Cardiac septum (tissue), 1 donor: ENCODE measurements at regions of chr2 and their contacts with region 1.

Region 1: GRCh38 chr2:60881047-60881932 is at the start of gene REL:
- DNase-seq: peak; percentile 97
- total RNA-seq, gene REL: 5.7 TPM

Region 2: DNA sequence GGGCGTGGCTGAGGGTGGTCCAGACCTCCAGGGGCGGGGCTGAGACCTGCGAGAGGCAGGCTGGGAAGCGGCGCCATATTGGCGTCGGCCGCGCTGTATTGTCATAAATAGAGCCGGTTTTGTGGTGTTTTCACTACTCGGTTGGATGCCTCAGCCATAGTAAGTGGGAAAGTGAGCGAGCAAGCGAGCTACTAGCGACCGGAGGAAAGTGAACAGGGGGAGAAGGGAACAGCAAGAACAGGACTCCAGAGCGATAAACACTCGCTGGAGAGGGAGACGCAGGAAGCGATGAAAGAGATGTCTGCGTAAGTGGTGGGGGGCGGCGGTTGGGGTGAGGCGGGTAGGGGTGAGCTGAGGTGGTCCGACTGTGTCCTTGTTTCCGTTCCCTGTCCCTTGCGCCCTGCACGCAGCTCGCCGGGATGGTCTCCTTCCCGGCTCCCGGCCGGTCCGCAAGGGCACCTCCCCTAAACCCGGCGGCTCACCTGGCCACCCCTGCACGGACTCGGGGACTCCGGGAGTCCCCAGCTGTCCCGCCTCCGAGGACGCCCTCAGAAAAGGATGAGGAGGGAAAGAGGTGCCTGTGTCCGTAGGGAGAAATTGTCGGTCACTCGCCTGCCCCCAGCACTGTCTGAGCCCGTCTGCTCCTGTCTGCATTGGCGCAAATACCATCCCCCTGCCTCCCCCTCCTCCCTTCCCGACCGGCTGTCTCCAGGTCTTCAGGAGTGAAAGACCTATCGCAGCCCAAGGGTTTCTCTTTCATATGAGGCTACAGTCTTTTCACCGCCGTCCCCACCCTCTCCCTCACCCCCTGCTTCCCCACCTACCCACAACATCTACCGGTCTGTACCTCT is 124.9 kb before region 1 on chr2 and contains the start of gene PAPOLG:
- intact Hi-C with region 1: loop called (anchors 2 kb)
- DNase-seq: peak; percentile 98
- total RNA-seq, gene PAPOLG: 9.7 TPM

Region 3: GRCh38 chr2:61016808-61017555 is 135.7 kb after region 1 on chr2:
- intact Hi-C with region 1: loop called (anchors 1 kb)
- DNase-seq: peak; percentile 91

Region 4: DNA sequence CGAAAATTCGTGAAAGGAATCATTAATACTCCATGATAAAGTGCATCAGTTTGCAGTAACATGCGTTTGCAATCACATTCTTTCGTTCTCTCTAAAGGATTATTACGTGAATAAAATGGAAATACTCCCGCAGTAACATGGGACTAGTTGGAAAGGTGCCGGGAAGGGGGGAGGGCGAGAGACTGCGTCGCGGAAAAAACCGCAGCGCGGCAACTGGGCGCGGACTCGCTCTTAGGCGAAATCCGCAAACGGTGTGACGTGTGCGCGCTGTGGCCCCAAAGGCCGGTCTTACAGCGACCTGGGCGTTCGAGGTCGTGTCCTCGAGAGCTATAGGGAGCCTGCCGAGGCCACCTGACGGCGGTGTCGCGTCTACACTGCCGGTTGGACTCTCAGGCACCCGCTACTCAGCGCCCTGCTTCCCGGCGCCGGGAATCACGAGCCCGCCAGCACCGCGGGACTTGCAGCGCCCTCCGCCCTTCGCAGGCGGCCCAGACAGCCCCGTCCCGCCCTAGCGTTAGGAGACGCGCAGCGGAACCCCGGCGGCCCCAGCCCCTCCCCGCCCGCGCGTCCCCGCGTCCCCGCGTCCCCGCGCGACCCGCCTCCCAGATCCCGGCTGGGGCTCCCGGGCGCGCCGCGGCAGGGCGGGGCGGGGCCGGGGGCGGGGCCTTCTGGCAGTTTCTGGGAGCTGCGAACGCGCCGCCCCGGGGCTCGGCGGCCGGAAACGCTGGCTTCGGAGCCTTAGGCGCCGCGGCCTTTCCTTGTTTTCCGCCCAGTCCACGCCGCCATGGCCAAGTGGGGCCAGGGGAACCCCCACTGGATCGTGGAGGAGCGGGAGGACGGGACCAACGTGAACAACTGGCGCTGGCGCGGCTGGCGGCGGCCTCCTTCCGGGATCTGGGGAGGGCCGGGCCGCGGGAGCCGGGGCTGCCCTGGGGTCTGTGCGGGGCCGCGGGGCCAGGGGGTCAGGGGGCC is 295.8 kb after region 1 on chr2:
- intact Hi-C with region 1: loop called (anchors 5 kb)
- DNase-seq: peak; percentile 96